HEK293 (cell line): ENCODE measurements at regions of chr11 and their contacts with region 1.

Region 1: DNA sequence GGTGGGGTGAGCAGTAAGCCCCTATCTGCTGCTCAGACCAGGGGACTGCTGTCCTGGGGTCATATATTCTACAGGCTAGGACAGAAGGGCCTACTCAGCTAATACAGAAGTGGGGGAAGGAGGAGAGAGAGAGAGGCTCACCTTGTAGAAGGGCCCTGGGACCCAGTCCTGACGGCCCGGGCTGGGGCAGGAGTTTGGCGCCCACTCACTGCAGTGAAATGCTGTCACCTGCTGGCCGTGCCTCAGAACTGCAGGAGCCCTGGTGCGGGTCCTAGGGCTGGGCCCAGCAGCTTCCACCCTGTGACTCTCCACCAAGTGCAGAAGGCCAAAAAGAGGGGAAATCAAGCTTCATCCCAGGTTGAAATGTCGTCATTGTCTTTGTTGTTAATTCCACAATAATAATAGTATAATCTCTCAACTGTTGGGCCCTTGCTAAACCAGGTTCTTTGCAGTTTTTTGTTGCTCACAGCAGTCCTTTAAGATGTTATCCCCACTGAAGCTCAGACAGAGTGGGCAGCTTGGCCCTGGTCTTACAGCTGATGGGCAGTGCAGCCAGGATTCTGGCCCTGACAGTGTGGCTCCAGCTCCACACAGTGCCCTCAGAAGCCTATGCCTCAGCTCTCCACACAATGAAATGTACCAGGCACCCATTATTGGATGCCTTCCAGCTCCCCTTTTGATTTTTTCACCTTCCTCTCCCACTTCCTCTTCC is 29.6 kb downstream of the TRIM29 start:
- H3K4me3 ChIP-seq: no peak overlapping the region
- H3K27ac ChIP-seq: no peak overlapping the region
- H3K4me1 ChIP-seq: no peaks in the 10 kb centered on the region
- CTCF ChIP-seq: peak; percentile 82

Region 2: GRCh38 chr11:119666463-119667131 is 441.7 kb before region 1 on chr11:
- CTCF ChIA-PET with region 1: interaction called, 40 read pairs
- POLR2A ChIA-PET with region 1: no interaction called
- H3K4me3 ChIP-seq: no peak overlapping the region
- H3K27ac ChIP-seq: no peak overlapping the region
- H3K4me1 ChIP-seq: no peaks in the 10 kb centered on the region
- CTCF ChIP-seq: peak; percentile 78

Region 3: GRCh38 chr11:119721129-119722120 is 386.9 kb before region 1 on chr11:
- CTCF ChIA-PET with region 1: interaction called, 17 read pairs
- POLR2A ChIA-PET with region 1: no interaction called
- H3K4me3 ChIP-seq: no peak overlapping the region
- H3K27ac ChIP-seq: no peak overlapping the region
- H3K4me1 ChIP-seq: no peaks in the 10 kb centered on the region; the same call in 1 of the 2 replicates
- CTCF ChIP-seq: peak; percentile 39; the same call in 1 of the 2 replicates

Region 4: DNA sequence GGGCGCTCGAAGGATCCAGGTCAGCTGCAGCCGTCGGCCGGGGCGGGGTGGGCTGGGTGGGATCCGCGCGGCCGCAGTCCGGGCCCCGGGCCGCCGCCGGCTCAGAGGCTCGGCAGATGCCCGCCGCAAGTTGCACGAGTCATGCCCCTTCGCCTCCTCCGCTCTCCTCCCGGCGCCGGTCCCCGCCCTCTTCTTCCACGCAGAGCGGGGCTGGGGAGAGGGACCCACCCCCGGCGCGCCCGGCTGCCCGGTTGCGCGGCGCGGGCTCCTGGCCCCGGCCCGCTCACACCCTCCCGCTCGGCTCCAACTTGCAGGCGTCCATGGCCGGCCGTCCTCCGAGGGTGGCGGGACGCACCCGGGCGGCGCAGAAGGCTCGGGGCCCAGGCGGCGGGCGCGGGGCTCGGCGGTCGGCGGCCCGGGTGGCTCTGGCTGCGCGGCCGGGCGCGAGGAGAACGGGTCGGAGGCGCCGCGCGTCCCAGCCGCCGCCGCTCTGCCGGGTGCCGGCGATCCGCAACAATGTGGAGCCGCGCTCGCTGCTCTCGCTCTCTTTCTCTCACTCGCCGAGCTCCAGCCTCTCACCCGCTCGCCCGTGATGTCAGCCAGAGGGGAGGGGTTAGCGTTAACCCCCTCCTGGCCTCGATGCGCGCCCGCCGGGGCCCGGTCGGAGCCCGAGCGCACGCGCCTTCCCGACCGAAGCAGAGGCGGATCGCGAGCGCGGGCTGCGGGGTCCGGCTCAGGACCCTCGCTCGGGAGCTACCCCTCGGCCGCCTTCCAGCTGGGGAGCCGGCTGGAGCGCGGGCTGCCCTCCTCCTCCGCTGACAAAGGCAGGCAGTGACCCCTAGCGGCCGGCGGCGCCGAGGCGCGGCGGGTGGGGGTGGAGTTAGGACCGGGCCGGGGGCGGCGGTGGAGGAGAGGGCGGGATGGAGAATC is 379.4 kb before region 1 on chr11 and contains the start of gene NECTIN1:
- CTCF ChIA-PET with region 1: interaction called, 18 read pairs
- POLR2A ChIA-PET with region 1: no interaction called
- H3K4me3 ChIP-seq: peak within 1 kb of the TSS; percentile 67
- H3K27ac ChIP-seq: peak within 1 kb of the TSS; percentile 79; the same call in 1 of the 2 replicates
- H3K4me1 ChIP-seq: no peaks in the 10 kb centered on the region
- CTCF ChIP-seq: peak; percentile 84

Region 5: DNA sequence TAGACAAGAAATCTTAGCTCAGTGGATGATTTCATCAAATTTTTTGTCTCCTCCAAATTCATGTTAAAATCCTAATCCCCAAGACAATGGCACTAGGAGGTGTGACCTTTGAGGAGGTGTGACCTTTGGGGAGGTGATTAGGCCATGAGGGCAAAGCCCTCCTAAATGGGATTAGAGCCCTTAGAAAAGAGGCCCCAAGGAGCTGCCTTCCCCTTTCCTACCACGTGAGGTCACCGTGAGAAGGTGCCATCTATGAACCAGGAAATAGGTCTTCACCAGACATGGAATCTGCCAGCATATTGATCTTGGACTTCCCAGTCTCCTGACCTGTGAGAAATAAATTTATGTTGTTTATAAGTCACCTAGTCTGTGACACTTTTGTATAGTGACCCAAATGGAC is 109.1 kb before region 1 on chr11:
- CTCF ChIA-PET with region 1: interaction called, 12 read pairs
- POLR2A ChIA-PET with region 1: no interaction called
- H3K4me3 ChIP-seq: no peak overlapping the region
- H3K27ac ChIP-seq: no peak overlapping the region
- H3K4me1 ChIP-seq: no peaks in the 10 kb centered on the region
- CTCF ChIP-seq: no peak

Region 6: GRCh38 chr11:120013325-120014270 is 94.7 kb before region 1 on chr11:
- CTCF ChIA-PET with region 1: interaction called, 29 read pairs
- POLR2A ChIA-PET with region 1: no interaction called
- H3K4me3 ChIP-seq: no peak overlapping the region
- H3K27ac ChIP-seq: no peak overlapping the region
- H3K4me1 ChIP-seq: no peaks in the 10 kb centered on the region
- CTCF ChIP-seq: peak; percentile 63